ENCODE measurements at regions of chr12 and their contacts with region 1.

Region 1: GRCh38 chr12:92145731-92146496 is at the start of gene BTG1:
- DNase-seq: peak; percentile 98
- ATAC-seq: peak; percentile 86
- H3K4me3 ChIP-seq: peak within 1 kb of the TSS; percentile 94 to 99 (median 98)
- H3K27ac ChIP-seq: peak within 1 kb of the TSS; percentile 64
- H3K4me1 ChIP-seq: peaks cover 40% of the 10 kb centered on the region
- H3K27me3 ChIP-seq: peaks cover 0 to 3% of the 10 kb centered on the region in 2 experiments; a peak in 1 of 5 replicates
- CTCF ChIP-seq: 0 out of 2 replicates have a peak, but pooled peaks have one; percentile 11
- EP300 ChIP-seq: no peak
- POLR2A ChIP-seq: peak; percentile 98 to 100
- RAD21 ChIP-seq: 0 out of 2 replicates have a peak, but pooled peaks have one; percentile 21
- total RNA-seq, gene BTG1: 7.5 and 9.8 TPM in 2 replicates

Region 2: GRCh38 chr12:91931111-91931510 is 214.8 kb before region 1 on chr12:
- CTCF ChIA-PET with region 1: no interaction called
- POLR2A ChIA-PET with region 1: interaction called, 4 read pairs
- in situ Hi-C with region 1: no loop called
- intact Hi-C with region 1: loop called (anchors 10 kb)
- DNase-seq: no peak
- ATAC-seq: no peak
- H3K4me3 ChIP-seq: no peak overlapping the region
- H3K27ac ChIP-seq: no peak overlapping the region
- H3K4me1 ChIP-seq: no peaks in the 10 kb centered on the region
- H3K27me3 ChIP-seq: no peaks in the 10 kb centered on the region
- CTCF ChIP-seq: no peak
- EP300 ChIP-seq: no peak
- POLR2A ChIP-seq: no peak
- RAD21 ChIP-seq: no peak

Region 3: DNA sequence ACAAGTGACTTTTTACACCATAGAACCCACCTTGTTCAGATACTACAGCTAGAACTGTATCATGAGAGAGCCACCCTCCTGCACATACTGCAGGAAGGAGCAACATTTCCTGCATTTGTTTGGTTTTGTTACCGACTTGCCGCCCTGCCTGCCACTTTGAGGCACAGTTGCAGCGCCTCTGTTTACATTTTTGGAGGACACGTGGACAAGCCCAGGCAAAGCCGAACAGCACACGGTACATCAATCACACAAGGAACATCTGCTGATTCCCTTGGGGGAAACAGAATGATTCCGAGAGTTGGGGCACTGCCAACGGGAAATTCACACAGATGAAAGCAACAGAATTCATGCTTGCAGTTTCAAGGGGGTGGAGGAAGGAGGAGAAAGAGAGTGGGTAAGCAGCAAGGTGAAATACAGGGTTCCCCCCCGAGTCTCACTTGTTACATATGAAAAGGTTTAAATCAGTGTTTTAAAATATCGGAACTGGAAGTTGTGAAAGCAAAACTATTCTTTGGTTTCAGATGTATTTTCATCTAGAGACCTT is 111.0 kb before region 1 on chr12:
- CTCF ChIA-PET with region 1: no interaction called
- POLR2A ChIA-PET with region 1: interaction called, 3 read pairs
- in situ Hi-C with region 1: no loop called
- intact Hi-C with region 1: loop called (anchors 10 kb)
- DNase-seq: peak; percentile 44
- ATAC-seq: peak; percentile 93
- H3K4me3 ChIP-seq: peak overlapping the region in 2 of 3 experiments; percentile 22 to 36; a peak in 2 of 6 replicates
- H3K27ac ChIP-seq: no peak overlapping the region
- H3K4me1 ChIP-seq: peaks cover 32% of the 10 kb centered on the region
- H3K27me3 ChIP-seq: no peaks in the 10 kb centered on the region; a peak in 1 of 5 replicates
- CTCF ChIP-seq: 0 out of 2 replicates have a peak, but pooled peaks have one; percentile 18
- EP300 ChIP-seq: peak in 1 of 2 experiments; percentile 36; a peak in 1 of 4 replicates
- POLR2A ChIP-seq: no peak
- RAD21 ChIP-seq: no peak

Region 4: GRCh38 chr12:92070054-92070863 is 75.7 kb before region 1 on chr12:
- CTCF ChIA-PET with region 1: no interaction called
- POLR2A ChIA-PET with region 1: interaction called, 73 read pairs
- in situ Hi-C with region 1: no loop called
- intact Hi-C with region 1: loop called (anchors 1 kb)
- DNase-seq: peak; percentile 81
- ATAC-seq: peak; percentile 95
- H3K4me3 ChIP-seq: peak overlapping the region; percentile 34 to 58 (median 51); a peak in 5 of 6 replicates
- H3K27ac ChIP-seq: peak overlapping the region; percentile 96
- H3K4me1 ChIP-seq: peaks cover 58% of the 10 kb centered on the region
- H3K27me3 ChIP-seq: no peaks in the 10 kb centered on the region
- CTCF ChIP-seq: peak; percentile 58
- EP300 ChIP-seq: peak in 1 of 2 experiments; percentile 65; a peak in 1 of 4 replicates
- POLR2A ChIP-seq: 0 out of 4 replicates have a peak, but pooled peaks of 1 of the 2 experiments have one; percentile 40
- RAD21 ChIP-seq: 0 out of 2 replicates have a peak, but pooled peaks have one; percentile 31

Region 5: DNA sequence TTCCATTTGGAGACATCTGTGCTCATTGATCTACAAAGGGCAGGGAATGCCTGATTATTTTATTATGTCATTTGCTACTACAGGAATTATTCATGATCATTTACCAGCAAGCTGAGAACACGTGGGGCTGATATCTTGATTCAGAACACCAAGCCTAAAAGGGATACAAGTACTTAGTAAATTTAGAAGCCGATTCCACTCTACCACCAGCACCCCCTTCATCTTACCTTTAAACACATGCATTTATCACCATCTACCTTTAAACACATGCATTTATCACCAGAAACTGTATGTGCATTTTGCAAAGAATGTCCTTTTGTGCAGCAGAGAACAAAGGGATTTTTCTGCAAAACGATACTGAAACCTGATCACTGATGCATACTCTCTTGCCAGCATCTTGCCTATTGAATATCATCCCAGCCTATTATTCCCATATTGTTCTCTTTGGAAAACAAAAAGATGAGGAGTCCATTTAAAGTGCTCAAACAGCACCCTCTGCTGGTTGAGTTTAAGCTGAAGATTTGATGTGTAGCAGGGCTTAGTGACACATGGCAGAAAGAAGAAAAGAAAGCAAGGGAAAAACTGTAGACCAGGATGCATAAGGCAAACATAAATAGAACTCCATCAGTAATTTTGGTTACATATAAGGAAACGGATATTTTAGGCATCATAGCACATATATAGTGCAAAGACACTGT is 424.3 kb after region 1 on chr12:
- CTCF ChIA-PET with region 1: no interaction called
- POLR2A ChIA-PET with region 1: no interaction called
- in situ Hi-C with region 1: no loop called
- intact Hi-C with region 1: loop called (anchors 2 kb)
- DNase-seq: peak; percentile 67
- ATAC-seq: peak; percentile 78
- H3K4me3 ChIP-seq: no peak overlapping the region
- H3K27ac ChIP-seq: no peak overlapping the region
- H3K4me1 ChIP-seq: peaks cover 8% of the 10 kb centered on the region
- H3K27me3 ChIP-seq: no peaks in the 10 kb centered on the region
- CTCF ChIP-seq: peak; percentile 79
- EP300 ChIP-seq: no peak
- POLR2A ChIP-seq: no peak
- RAD21 ChIP-seq: peak; percentile 64